PC-9 (cell line): ENCODE measurements at regions of chr19 and their contacts with region 1.

Region 1: GRCh38 chr19:52189735-52190486 is at the start of gene PPP2R1A:
- DNase-seq: peak; percentile 99 to 100
- H3K4me3 ChIP-seq: peak within 1 kb of the TSS; percentile 84
- H3K27ac ChIP-seq: peak within 1 kb of the TSS; percentile 87
- H3K4me1 ChIP-seq: peaks cover 17% of the 10 kb centered on the region
- H3K27me3 ChIP-seq: no peaks in the 10 kb centered on the region
- CTCF ChIP-seq: no peak
- total RNA-seq, gene PPP2R1A: 316 and 324 TPM in 2 replicates

Region 2: DNA sequence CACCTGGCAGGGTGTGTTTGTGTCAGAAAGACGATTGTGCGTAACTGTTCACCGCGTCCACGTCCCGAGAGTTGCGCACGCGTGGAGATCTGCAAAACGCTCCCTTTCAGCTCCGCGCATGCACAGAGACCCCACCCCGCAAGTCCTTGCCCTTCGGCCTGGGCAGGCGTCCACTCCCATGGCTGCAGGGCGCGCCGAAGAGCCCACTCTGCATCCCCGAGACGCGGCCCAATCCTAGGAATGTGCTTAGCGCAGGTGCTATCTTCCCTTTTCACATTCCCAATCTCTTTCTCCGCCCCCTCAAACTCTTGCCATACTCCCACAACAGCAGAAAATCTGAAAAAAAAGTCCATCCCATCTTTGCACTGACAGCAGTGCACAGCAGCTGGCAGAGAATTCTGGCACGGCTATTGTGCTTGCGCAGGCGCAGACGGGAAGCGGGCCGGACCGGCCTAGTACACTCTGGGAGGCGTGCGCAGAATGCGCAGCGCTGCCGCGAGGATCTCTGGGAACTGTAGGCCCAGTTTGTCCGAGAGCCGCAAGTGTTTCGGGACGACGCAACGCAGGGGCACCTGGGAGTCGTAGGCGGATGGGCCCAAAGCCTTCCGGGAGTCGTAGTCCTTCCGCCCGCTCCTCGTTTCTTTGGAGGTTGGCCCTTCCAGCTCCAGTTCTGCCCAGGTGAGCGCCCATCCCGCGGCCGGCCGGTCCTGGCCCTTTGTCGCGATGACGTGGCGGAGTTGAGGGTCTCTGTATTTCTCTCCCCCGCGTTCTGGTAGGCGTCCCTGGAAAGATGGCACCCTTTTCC is 595.7 kb before region 1 on chr19:
- CTCF ChIA-PET with region 1: no interaction called
- POLR2A ChIA-PET with region 1: interaction called, 51 read pairs
- intact Hi-C with region 1: no loop called
- DNase-seq: peak; percentile 93 to 99
- H3K4me3 ChIP-seq: peak overlapping the region; percentile 70
- H3K27ac ChIP-seq: no peak overlapping the region
- H3K4me1 ChIP-seq: peaks cover 5% of the 10 kb centered on the region; the same call in 1 of the 2 replicates
- H3K27me3 ChIP-seq: 0 out of 2 replicates have a peak, but pooled peaks cover 10% of the 10 kb centered on the region
- CTCF ChIP-seq: no peak

Region 3: GRCh38 chr19:51926784-51927742 is 262.8 kb before region 1 on chr19 and contains the start of gene ZNF613:
- CTCF ChIA-PET with region 1: no interaction called
- POLR2A ChIA-PET with region 1: no interaction called
- intact Hi-C with region 1: loop called (anchors 1 kb)
- DNase-seq: peak; percentile 89 to 91
- H3K4me3 ChIP-seq: peak within 1 kb of the TSS; percentile 70
- H3K27ac ChIP-seq: peak within 1 kb of the TSS; percentile 69
- H3K4me1 ChIP-seq: peaks cover 5% of the 10 kb centered on the region
- H3K27me3 ChIP-seq: no peaks in the 10 kb centered on the region
- CTCF ChIP-seq: peak; percentile 55; the same call in 1 of the 2 replicates
- total RNA-seq, gene ZNF613: 4.8 and 5.6 TPM in 2 replicates

Region 4: DNA sequence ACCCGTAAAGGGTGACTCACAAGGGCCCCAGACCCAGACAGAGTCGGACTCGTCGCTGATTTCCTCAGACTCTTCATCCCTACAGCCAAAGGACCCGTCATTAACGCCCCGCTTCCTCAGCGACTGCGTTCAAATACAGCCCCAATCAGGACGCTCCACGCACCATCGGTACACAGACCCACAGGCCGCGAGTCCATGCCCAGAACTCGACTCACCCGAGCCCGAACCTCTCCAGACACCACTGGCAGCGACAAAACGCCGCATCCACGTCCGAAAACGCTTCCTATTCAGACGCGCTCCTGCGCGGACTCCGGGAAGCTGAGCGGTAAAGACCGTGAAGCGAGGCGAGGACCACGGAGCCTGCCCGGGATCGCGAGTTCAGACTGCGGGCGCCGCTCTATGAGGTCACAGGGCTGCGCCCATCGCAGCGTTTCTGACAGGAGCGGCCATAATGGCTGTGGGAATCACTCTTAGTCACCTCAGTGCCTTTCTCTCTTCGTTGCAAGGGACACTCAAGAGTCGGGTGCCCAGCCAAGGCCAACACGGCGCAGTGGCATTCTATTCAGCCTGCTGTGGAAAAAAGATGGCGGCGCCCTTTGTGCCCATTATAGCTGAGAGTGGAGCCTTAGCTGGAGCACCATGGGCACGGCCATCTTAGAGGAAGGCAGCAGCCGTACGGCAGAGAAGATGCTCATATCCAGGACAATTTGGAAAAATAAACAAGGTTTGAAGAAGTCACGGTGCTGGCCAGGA is 161.7 kb before region 1 on chr19 and contains the start of gene ZNF614:
- CTCF ChIA-PET with region 1: no interaction called
- POLR2A ChIA-PET with region 1: interaction called, 28 read pairs
- intact Hi-C with region 1: no loop called
- DNase-seq: peak; percentile 75 to 85
- H3K4me3 ChIP-seq: peak within 1 kb of the TSS; percentile 79
- H3K27ac ChIP-seq: peak within 1 kb of the TSS; percentile 69
- H3K4me1 ChIP-seq: peaks cover 7% of the 10 kb centered on the region; the same call in 1 of the 2 replicates
- H3K27me3 ChIP-seq: no peaks in the 10 kb centered on the region
- CTCF ChIP-seq: no peak
- total RNA-seq, gene ZNF614: 8.6 and 9.9 TPM in 2 replicates

Region 5: DNA sequence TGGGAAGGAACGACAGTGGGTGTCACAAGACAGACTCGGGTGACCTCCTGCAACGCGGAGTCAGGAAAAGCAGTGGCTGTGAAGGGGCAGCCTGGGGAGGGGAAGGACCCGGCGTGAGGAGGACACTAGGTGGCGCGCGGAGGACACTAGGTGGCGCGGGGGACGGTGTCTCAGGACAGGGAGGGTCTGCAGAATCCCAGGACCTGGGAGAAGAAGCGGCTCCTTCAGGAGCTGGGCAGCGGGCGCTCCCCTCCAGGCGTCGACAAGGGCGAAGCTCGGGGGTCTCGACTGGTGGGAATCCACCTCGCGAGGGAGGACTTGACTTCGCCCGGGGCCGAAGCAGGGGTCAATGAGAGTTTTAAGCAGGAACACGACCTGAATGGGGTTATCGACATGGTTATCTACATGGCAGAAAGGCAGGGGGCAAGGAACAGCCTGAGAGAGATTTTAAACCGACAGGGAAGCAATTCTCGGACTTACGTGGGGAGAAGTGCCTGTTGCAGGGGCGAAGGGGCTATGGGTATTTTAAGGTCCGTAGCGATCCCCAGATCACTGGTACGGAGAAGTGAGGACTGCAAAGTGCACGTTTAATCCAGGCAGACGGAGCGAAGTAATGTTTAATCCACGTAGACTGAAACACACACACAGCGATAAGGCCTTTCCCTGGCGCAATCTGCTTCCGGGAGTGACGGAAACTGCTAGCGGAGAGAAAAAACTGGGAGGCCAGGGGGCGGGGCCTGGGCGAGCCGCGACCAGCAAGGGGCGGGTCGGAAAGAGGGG is 50.5 kb before region 1 on chr19 and contains the start of gene ZNF616:
- CTCF ChIA-PET with region 1: no interaction called
- POLR2A ChIA-PET with region 1: interaction called, 46 read pairs
- intact Hi-C with region 1: loop called (anchors 1 kb)
- DNase-seq: peak; percentile 82 to 88
- H3K4me3 ChIP-seq: peak within 1 kb of the TSS; percentile 74
- H3K27ac ChIP-seq: peak within 1 kb of the TSS; percentile 76
- H3K4me1 ChIP-seq: peaks cover 24% of the 10 kb centered on the region
- H3K27me3 ChIP-seq: no peaks in the 10 kb centered on the region
- CTCF ChIP-seq: peak; percentile 93
- total RNA-seq, gene ZNF616: 9.9 and 12.6 TPM in 2 replicates

Region 6: DNA sequence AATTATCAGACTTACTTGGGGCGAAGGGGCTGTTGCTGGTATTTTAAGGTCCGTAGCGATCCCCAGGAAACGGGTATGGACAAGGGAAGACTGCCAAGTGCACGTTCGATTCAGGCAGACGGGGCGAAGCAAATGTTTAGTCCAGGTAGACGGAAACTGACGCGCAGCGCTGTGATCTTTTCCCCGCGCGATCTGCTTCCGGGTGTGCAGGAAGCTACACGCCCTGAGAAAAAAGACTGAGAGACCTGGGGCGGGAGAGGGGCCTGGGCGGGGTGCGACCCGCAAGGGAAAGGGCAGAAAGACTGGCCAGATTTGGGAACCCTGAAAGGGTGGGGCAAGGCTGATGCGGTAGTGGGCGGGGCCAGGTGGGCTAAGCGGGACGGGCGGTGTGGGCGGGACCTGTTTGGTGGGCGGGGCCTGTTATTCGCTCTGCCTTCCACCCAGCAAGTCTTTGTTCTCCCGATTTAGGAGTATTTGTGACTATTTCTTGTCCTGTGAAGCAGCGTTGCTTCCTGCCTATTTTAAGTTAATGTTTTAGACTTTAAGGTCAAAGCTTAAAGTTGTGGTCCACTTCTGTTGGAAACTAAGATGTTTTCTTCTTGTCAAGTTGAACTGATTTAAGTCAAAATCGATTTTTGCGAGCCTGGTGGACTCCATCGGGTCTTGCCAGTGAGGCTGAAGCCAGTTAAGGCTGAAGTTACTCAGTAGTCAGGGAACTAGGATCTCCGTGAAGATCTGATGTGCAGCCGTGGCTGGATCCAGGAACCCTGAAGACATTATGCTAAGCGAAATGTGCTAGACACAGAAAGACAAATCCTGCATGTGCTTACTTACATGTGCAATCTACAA is 18.4 kb before region 1 on chr19 and contains the start of gene ZNF836:
- CTCF ChIA-PET with region 1: interaction called, 8 read pairs
- POLR2A ChIA-PET with region 1: interaction called, 22 read pairs
- intact Hi-C with region 1: loop called (anchors 1 kb)
- DNase-seq: peak; percentile 67 to 88
- H3K4me3 ChIP-seq: peak within 1 kb of the TSS; percentile 95
- H3K27ac ChIP-seq: no peak within 1 kb of the TSS
- H3K4me1 ChIP-seq: peaks cover 18% of the 10 kb centered on the region
- H3K27me3 ChIP-seq: no peaks in the 10 kb centered on the region
- CTCF ChIP-seq: no peak
- total RNA-seq, gene ZNF836: 12.2 and 14.3 TPM in 2 replicates

Region 7: DNA sequence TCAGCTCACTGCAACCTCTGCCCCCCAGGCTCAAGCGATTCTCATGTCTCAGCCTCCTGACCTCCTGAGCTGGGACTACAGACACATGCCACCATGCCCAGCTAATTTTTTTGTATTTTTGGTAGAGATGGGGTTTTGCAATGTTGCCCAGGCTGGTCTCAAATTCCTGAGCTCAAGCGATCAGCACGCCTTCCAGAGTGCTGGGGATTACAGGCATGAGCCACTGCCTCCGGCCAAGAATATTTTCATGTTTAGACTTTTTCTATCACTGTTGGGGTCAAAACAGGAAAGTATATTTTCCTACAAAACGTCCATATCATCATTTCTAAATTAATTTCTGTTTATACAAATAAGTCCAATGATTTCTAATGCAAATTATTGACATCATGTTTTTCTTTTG is 70.0 kb after region 1 on chr19:
- CTCF ChIA-PET with region 1: no interaction called
- POLR2A ChIA-PET with region 1: interaction called, 23 read pairs
- intact Hi-C with region 1: no loop called
- DNase-seq: no peak
- H3K4me3 ChIP-seq: no peak overlapping the region
- H3K27ac ChIP-seq: no peak overlapping the region
- H3K4me1 ChIP-seq: no peaks in the 10 kb centered on the region
- H3K27me3 ChIP-seq: peaks cover 24% of the 10 kb centered on the region; the same call in 1 of the 2 replicates
- CTCF ChIP-seq: no peak